ENCODE measurements at regions of chr2 and their contacts with region 1.

Region 1: DNA sequence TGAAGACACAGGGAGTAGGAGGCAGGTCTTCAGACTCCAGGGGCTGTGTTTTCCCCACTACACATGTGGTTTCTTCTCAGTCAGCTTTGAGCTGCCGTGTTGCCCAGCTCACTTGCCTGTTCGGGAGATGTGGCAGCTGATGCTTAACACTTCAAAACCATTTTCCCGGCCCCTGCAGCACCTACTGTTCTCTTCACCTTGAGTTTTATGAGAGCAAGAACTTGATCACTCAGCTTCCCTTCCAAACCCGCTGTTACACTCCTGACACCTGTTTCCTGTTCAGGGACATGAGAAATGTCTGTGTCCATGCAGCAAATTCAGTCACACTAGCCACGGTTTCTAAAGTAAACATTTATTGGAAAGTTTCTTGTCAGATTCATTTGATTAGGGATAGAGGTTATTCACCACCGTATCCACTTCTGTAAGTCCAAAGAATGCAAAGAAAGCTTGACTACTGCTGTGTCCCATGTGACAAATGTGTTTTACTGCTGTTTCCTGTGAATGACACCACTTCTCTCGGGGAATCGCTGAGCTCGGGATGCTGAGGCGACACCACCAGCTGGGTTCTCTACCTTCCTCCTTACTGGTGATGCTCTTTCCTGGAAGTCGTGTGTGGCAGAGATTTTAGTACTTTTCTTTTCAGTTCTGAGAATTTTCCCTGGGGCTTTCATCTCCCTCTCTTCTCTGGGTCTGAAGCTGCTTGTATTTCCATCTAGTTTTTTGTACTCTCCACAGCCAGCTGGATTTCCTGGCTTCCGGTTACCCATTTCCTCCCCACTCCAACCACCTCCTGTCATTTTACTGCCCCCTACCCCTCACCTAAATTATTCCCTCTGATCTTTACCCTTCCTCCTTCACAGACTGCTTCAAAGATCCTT is 91.7 kb downstream of the KLF7 start:
- DNase-seq: peak; percentile 32
- H3K4me3 Mint-ChIP-seq: peak overlapping the region; percentile 51
- H3K27ac Mint-ChIP-seq: peak overlapping the region; percentile 78
- H3K4me1 Mint-ChIP-seq: peaks cover 30% of the 10 kb centered on the region
- H3K27me3 Mint-ChIP-seq: no peaks in the 10 kb centered on the region

Region 2: GRCh38 chr2:205776139-205776538 is 1297.9 kb before region 1 on chr2:
- intact Hi-C with region 1: no loop called
- DNase-seq: peak; percentile 24
- H3K4me3 Mint-ChIP-seq: no peak overlapping the region
- H3K27ac Mint-ChIP-seq: no peak overlapping the region
- H3K4me1 Mint-ChIP-seq: no peaks in the 10 kb centered on the region
- H3K27me3 Mint-ChIP-seq: peaks cover 21% of the 10 kb centered on the region

Region 3: DNA sequence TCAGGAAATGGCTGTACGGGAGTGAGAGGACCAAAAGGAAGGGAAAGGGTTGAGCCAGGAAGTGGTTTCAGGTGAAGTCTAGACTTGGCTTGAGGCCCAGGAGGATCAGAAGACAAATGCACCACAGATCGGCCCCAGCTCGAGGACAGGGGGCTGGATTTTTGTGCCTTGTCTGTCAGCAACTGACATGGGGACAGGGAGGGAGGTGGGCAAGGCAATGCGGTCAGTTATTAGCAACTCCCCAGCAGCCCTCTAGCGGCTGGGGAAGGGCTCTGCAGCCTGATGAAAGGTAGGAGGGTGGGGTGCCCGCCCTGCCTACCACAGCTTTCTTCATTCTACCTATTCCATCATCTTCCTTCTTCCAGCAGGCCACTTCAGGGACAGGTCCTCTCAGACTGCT is 84.7 kb before region 1 on chr2:
- intact Hi-C with region 1: no loop called
- DNase-seq: no peak
- H3K4me3 Mint-ChIP-seq: no peak overlapping the region
- H3K27ac Mint-ChIP-seq: no peak overlapping the region
- H3K4me1 Mint-ChIP-seq: peaks cover 21% of the 10 kb centered on the region
- H3K27me3 Mint-ChIP-seq: no peaks in the 10 kb centered on the region

Region 4: DNA sequence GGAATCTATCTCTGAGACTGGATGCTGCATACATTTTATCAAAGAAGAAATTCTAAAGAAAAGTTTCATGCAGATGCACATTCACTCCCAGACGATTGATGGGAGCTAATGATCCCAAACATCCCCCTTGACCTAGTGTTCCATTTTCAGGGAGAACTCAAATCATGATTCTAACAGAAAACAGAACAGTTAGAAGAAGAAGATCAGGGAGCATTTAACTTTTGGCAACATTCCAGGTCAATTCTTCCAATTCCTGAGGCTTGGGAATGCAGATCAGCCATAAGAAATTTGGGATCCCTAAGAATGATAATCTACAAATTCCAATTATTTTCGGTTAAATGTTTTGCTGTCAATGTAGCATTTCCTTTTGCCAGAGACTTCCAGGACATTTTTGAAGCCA is 38.2 kb before region 1 on chr2:
- intact Hi-C with region 1: no loop called
- DNase-seq: no peak
- H3K4me3 Mint-ChIP-seq: no peak overlapping the region
- H3K27ac Mint-ChIP-seq: no peak overlapping the region
- H3K4me1 Mint-ChIP-seq: no peaks in the 10 kb centered on the region
- H3K27me3 Mint-ChIP-seq: peaks cover 13% of the 10 kb centered on the region

Region 5: GRCh38 chr2:207046724-207047123 is 27.3 kb before region 1 on chr2:
- intact Hi-C with region 1: loop called (anchors 2 kb)
- DNase-seq: peak; percentile 17
- H3K4me3 Mint-ChIP-seq: no peak overlapping the region
- H3K27ac Mint-ChIP-seq: no peak overlapping the region
- H3K4me1 Mint-ChIP-seq: peaks cover 12% of the 10 kb centered on the region
- H3K27me3 Mint-ChIP-seq: peaks cover 10% of the 10 kb centered on the region

Region 6: DNA sequence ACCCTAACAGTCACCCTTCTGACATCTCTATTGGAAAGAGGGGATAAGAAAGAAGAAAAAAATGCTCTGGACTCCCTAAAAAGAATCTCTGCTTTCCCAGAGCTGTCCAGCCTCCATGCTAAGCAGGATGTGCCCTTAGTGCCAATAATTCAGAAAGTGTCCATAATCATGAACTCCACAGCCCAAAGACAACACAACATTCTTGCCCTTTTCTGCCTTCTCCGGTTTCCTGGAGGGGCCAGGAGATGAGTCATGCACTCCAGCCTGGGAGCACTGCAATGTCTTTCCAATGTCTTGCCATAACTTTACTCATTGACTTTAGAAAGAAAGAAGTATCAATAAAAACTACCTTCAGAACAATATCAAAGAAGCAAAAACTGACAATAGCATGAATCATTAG is 47.7 kb after region 1 on chr2:
- intact Hi-C with region 1: loop called (anchors 5 kb)
- DNase-seq: no peak
- H3K4me3 Mint-ChIP-seq: no peak overlapping the region
- H3K27ac Mint-ChIP-seq: no peak overlapping the region
- H3K4me1 Mint-ChIP-seq: peaks cover 46% of the 10 kb centered on the region
- H3K27me3 Mint-ChIP-seq: no peaks in the 10 kb centered on the region

Region 7: GRCh38 chr2:207156451-207157161 is 82.6 kb after region 1 on chr2:
- intact Hi-C with region 1: loop called (anchors 1 kb)
- DNase-seq: no peak
- H3K4me3 Mint-ChIP-seq: no peak overlapping the region
- H3K27ac Mint-ChIP-seq: no peak overlapping the region
- H3K4me1 Mint-ChIP-seq: peaks cover 78% of the 10 kb centered on the region
- H3K27me3 Mint-ChIP-seq: no peaks in the 10 kb centered on the region